ENCODE measurements at regions of chr7 and their contacts with region 1.

Region 1: DNA sequence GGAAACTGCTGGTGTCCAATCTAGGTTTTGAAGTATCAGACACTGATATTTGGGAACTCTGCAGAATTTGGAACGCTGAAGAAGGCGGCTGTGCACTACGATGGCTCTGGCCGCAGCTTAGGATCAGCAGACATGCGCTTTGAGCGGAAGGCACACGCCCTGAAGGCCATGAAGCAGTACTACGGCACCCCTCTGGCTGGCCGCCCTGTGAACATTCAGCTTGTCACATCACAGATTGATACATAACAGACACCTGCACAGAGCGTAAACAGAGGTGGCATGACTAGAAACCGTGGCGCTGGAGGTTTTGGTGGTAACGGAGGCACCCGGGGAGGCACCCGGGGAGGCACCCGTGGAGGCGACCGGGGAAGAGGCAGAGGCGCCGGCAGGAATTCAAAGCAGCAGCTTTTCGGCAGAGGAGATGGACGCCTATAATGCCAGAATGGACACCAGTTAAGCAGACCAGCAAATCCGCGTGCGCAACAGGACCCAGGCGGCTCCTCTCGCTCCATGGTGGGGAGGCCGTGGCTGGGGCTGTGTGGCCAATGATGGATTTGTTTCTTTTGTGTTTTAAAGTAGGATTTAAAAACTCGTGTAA is 22.2 kb upstream of the CCL24 start:
- DNase-seq: no peak
- ATAC-seq: peak; percentile 43; the same call in 2 of the 3 replicates
- H3K4me3 ChIP-seq: no peak overlapping the region
- H3K27ac ChIP-seq: no peak overlapping the region
- H3K4me1 ChIP-seq: no peaks in the 10 kb centered on the region
- H3K27me3 ChIP-seq: no peaks in the 10 kb centered on the region; a peak in 1 of 5 replicates
- CTCF ChIP-seq: no peak
- EP300 ChIP-seq: no peak
- POLR2A ChIP-seq: no peak
- RAD21 ChIP-seq: no peak

Region 2: DNA sequence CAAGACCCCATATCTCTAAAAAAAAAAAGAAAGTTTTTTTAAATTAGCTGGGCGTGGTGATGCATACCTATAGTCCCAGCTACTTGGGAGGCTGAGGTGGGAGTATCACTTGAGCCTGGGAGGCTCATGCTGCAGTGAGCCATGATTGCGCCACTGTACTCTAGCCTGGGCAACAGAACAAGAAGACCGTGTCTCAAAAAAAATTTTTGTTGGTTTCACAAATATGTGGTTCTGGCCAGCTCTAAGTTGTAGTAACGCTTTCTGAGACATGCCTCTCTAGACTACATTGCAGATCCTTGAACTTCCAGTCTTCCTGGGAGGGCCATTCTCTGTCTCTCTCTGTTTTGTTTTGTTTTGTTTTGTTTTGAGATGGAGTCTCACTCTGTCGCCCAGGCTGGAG is 18.4 kb after region 1 on chr7:
- CTCF ChIA-PET with region 1: no interaction called
- POLR2A ChIA-PET with region 1: no interaction called
- in situ Hi-C with region 1: no loop called
- intact Hi-C with region 1: loop called (anchors 2 kb)
- DNase-seq: no peak
- ATAC-seq: no peak
- H3K4me3 ChIP-seq: no peak overlapping the region
- H3K27ac ChIP-seq: no peak overlapping the region
- H3K4me1 ChIP-seq: peaks cover 22% of the 10 kb centered on the region
- H3K27me3 ChIP-seq: no peaks in the 10 kb centered on the region
- CTCF ChIP-seq: no peak
- EP300 ChIP-seq: no peak
- POLR2A ChIP-seq: no peak
- RAD21 ChIP-seq: no peak